ENCODE measurements at regions of chr2 and their contacts with region 1.

Region 1: DNA sequence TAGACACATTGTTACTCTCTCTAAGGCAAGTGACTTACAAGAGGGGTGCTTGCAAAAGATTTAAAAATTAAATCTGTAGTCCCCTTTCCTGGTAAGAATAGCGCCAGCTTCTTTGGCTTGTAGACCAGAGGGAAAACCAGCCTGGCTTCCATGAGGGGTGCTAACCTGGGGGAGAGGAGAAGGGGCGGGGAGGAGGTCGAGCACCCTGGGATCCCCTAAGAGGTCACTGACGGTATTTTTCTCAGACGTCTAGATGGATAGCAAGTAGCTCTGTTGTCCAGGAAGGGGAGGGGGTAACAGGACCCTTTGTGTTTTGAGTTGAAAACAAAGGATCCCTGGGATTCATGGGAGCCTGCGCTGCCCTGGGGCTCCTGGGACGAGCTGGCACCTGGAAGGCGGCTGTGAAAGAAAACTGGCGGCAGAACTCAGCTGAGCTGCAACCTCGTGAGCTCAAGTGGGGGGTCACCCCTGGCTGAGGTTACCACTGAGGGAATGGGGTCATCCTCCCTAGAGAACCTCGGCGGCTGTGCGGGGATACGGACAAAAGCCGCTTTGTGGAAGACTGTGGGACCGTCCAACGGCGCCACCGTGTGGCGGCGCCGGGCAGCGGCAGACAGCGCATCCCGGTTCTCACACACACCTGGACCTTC is 37.8 kb upstream of the MRPL19 start:
- DNase-seq: peak; percentile 62
- H3K4me3 Mint-ChIP-seq: no peak overlapping the region
- H3K27ac Mint-ChIP-seq: no peak overlapping the region
- H3K4me1 Mint-ChIP-seq: no peaks in the 10 kb centered on the region
- H3K27me3 Mint-ChIP-seq: peaks cover 55% of the 10 kb centered on the region

Region 2: DNA sequence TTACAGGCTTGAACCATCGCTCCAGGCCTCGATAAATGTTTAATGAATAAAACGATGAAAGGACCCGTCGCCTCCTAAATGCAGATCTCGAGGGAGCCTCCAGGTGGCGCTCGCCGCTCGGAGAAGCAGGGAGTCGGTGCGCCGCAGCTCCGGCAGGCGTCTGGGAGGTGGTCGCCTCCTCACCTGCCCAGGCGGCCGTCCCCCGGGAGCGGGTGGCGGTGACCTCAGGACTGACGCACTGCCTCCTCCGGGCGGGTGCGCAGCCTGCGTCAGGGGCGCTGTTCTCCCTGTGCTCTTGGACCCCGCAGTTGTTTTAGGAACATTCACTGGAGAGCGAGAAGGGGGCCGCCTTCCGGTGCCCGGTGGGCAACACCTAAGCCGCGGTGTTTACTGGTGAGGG is 689.0 kb before region 1 on chr2:
- CTCF ChIA-PET with region 1: interaction called, 4 read pairs
- intact Hi-C with region 1: loop called (anchors 1 kb)
- DNase-seq: peak; percentile 80
- H3K4me3 Mint-ChIP-seq: peak overlapping the region; percentile 41
- H3K27ac Mint-ChIP-seq: no peak overlapping the region
- H3K4me1 Mint-ChIP-seq: peaks cover 5% of the 10 kb centered on the region
- H3K27me3 Mint-ChIP-seq: peaks cover 3% of the 10 kb centered on the region

Region 3: DNA sequence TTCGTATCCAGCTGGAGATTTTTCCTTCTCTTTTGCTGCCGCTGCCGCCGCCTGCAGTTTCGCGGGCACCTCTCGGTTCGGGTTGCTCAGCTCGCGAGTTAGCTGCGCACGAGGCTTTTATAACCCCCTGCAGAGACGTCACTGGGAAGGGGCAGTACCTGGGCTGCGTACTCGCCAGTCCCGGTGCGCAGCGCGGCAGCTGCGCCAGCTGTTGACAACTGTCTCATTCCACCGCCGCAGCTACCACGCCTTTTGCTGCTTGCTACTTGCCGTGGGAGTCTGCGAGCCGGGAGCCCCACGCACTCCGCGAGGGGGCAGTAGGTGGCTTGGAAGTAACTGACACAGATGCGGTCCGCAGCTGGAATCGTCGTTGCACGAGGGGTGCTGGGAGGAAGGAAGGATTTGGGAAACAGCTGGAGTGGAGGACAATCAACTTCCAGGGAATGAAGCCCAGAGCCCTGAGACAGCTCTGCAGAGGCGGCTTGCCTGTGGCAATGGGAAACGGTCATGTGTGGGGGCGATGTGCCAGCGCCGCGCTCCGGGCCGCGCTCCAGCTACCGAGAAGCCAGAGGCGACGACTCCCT is 409.3 kb before region 1 on chr2 and contains the start of gene TACR1:
- CTCF ChIA-PET with region 1: interaction called, 3 read pairs
- intact Hi-C with region 1: loop called (anchors 2 kb)
- DNase-seq: peak; percentile 72
- H3K4me3 Mint-ChIP-seq: peak within 1 kb of the TSS; percentile 66
- H3K27ac Mint-ChIP-seq: no peak within 1 kb of the TSS
- H3K4me1 Mint-ChIP-seq: peaks cover 7% of the 10 kb centered on the region
- H3K27me3 Mint-ChIP-seq: peaks cover 67% of the 10 kb centered on the region
- total RNA-seq, gene TACR1: not detected

Region 4: GRCh38 chr2:75560768-75561565 is 47.8 kb before region 1 on chr2 and contains the start of gene EVA1A:
- CTCF ChIA-PET with region 1: interaction called, 8 read pairs
- intact Hi-C with region 1: loop called (anchors 2 kb)
- DNase-seq: peak; percentile 37
- H3K4me3 Mint-ChIP-seq: peak within 1 kb of the TSS; percentile 77
- H3K27ac Mint-ChIP-seq: no peak within 1 kb of the TSS
- H3K4me1 Mint-ChIP-seq: peaks cover 13% of the 10 kb centered on the region
- H3K27me3 Mint-ChIP-seq: peaks cover 36% of the 10 kb centered on the region
- total RNA-seq, gene EVA1A: not detected

Region 5: DNA sequence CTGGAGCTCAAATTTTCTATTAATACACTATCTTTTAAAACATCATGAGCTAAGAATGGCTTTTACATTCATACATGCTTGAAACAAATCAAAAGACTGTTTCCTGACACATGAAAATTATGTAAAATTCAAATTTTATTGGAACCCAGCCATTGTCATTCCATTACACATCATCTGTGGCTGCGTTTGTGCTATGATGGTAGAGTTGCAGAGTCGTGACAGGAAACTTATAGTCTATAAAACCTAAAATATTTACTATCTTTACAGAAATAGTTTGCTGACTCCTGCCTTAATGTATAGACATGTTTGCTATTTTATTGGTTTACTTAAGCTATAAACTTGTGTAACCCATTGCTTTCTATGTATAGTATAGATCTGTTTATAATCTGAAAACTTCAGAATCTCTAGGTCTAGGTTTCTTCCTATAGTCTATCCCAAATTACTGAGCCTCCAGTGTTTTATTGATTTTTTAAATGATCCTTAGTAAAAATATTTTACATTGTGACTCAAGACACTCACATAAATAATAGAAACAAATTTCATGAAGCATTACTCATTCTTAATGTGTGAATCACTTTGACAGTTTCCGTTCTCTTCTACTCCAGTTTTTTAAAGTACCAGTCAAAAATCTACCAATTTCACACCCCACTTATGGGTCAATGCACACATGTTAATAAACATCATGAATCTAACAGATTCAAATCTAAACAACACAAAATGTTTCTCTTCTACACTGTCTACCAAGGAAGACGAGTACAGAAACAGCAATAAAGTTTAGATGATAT is 11.3 kb after region 1 on chr2:
- CTCF ChIA-PET with region 1: interaction called, 10 read pairs
- intact Hi-C with region 1: no loop called
- DNase-seq: no peak
- H3K4me3 Mint-ChIP-seq: no peak overlapping the region
- H3K27ac Mint-ChIP-seq: no peak overlapping the region
- H3K4me1 Mint-ChIP-seq: peaks cover 2% of the 10 kb centered on the region
- H3K27me3 Mint-ChIP-seq: peaks cover 12% of the 10 kb centered on the region